ENCODE measurements at regions of chr1 and their contacts with region 1.

Region 1: GRCh38 chr1:68352202-68352601 is 97.6 kb downstream of the RPE65 start:
- DNase-seq: no peak

Region 2: GRCh38 chr1:68269637-68270426 is 82.4 kb before region 1 on chr1:
- intact Hi-C with region 1: no loop called
- DNase-seq: no peak

Region 3: DNA sequence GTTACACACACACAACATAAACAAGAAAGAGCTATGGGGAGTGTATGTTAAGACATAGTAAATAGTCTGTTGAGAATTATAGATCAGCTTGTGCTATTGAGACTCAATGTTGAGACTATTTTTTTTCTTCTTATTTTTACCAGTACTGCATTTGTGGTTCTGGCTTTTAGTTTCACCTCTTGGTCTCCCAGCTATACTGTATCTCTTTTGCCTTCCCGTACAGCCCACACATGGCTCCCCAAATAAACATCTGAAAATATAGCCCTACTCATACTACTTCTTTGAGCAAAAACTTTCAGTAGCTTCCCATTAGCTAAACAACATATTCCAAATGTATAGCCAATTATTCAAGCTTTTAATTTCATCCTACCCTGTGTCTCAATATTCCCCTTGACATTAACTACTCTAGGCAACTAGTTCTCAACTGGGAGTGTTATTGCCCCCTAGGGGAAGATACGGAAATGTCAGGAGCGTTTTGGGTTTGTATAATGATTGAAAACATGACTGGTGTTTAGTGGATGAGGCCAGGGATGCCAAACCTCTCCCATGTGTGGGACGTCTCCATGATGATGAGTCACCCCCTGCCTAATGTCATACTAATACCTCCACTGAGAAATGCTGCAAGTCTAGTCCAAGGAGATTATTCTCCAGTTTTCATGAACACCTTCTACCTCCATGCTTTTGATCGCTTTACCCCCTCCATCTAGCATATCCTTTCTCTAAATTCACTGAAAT is 90.8 kb after region 1 on chr1:
- intact Hi-C with region 1: loop called (anchors 5 kb)
- DNase-seq: no peak

Measured in cardiac septum (tissue), 1 donor.